PC-3 (cell line): ENCODE measurements at regions of chr18 and their contacts with region 1.

Region 1: DNA sequence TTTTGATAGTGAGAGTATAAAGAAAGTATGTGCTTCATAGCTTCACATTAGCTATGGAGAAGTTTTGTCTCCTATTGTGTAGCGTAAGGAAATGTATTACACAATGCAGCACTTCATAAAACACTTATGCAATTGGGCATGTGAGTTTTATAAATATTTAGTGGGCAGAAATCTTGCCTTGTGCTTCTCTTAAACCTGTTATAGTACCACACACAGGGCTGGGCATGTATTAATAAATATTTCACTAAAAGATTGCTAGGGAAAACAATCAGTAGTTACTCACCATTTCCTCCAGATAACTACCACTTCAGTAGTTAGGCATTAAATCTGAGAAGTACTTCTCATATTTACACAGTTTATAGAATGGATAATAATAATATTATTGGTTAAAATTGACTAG is 1080.8 kb upstream of the PIK3C3 start:
- DNase-seq: peak; percentile 8
- ATAC-seq: peak; percentile 57
- H3K4me3 ChIP-seq: no peak overlapping the region
- H3K27ac ChIP-seq: no peak overlapping the region
- H3K4me1 ChIP-seq: peaks cover 7% of the 10 kb centered on the region; the same call in 1 of the 2 replicates
- H3K27me3 ChIP-seq: no peaks in the 10 kb centered on the region
- CTCF ChIP-seq: no peak

Region 2: DNA sequence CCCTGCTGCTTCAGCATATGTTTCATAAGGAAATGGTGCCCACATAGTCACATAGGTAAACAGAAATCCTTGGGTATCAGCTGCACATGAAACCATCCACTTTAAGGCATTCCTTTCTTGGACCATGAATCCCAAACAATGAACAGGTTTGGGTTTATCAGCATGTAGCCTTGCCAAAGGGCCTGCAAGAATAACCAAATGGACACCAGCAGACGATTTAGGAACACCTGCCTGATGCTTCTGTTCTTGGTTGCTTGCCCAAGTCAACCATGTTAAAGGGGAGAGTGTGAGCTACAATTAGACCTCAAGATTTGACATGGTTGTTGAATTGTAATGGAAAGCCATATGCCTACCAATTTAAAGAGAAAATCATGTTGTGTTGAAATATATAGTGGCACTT is 261.9 kb before region 1 on chr18:
- CTCF ChIA-PET with region 1: no interaction called
- POLR2A ChIA-PET with region 1: no interaction called
- intact Hi-C with region 1: no loop called
- DNase-seq: no peak
- ATAC-seq: no peak
- H3K4me3 ChIP-seq: no peak overlapping the region
- H3K27ac ChIP-seq: no peak overlapping the region
- H3K4me1 ChIP-seq: no peaks in the 10 kb centered on the region
- H3K27me3 ChIP-seq: no peaks in the 10 kb centered on the region
- CTCF ChIP-seq: no peak

Region 3: GRCh38 chr18:40911582-40912254 is 37.5 kb after region 1 on chr18:
- CTCF ChIA-PET with region 1: no interaction called
- POLR2A ChIA-PET with region 1: no interaction called
- intact Hi-C with region 1: loop called (anchors 2 kb)
- DNase-seq: peak; percentile 34
- ATAC-seq: peak; percentile 87
- H3K4me3 ChIP-seq: no peak overlapping the region
- H3K27ac ChIP-seq: peak overlapping the region; percentile 93
- H3K4me1 ChIP-seq: peaks cover 15% of the 10 kb centered on the region
- H3K27me3 ChIP-seq: no peaks in the 10 kb centered on the region
- CTCF ChIP-seq: no peak